ENCODE measurements at regions of chr14 and their contacts with region 1.

Region 1: DNA sequence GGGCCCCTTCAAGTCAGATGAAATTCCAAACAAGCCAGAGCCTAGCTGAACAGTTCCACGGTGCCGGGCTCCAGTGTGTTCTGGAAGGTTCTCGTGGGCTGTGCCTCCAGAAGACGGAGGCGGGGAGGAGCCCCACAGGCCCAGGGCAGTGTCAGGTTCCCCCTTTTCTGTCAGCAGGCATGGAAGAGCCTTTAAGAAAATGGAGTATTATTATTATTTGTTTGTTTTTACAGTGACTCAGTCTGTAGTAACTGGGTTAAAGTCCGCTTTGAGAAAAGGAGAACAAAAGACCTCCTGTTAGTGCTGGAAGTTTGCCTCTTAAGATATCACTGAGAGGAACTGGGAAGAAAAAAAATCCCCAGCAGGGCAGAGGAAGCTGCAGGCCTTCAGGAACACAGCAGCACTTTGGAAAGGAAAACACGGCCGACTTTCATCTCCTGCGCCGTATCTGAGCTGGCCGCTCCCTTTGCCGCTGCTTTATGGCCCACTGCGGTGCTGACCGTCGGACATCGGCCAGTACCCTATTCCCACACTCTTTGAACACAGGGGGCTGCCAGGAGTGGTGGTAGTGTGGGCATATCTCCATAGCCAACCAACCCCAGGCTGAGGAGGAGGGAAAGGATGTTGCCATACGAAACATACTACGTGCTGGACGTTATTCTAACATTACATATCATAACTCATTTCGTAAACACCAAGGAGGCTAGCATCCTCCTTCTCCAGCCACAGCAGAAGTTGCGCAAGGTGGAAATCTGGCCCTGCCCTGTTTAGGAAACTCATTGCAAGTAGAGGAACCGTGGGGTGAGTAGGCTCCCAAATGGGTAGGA is 194.0 kb downstream of the ZFP36L1 start:
- DNase-seq: peak; percentile 72 to 82 (median 77)
- ATAC-seq: peak; percentile 63 to 95 (median 92)
- H3K4me3 ChIP-seq: peak overlapping the region in 4 of 12 donors; percentile 6 to 30 (median 9)
- H3K27ac ChIP-seq: peak overlapping the region; percentile 59 to 98 (median 91)
- H3K4me1 ChIP-seq: peaks cover 0 to 70% (median 21%) of the 10 kb centered on the region in 12 donors
- H3K27me3 ChIP-seq: no peaks in the 10 kb centered on the region
- CTCF ChIP-seq: no peak
- POLR2A ChIP-seq: no peak

Region 2: DNA sequence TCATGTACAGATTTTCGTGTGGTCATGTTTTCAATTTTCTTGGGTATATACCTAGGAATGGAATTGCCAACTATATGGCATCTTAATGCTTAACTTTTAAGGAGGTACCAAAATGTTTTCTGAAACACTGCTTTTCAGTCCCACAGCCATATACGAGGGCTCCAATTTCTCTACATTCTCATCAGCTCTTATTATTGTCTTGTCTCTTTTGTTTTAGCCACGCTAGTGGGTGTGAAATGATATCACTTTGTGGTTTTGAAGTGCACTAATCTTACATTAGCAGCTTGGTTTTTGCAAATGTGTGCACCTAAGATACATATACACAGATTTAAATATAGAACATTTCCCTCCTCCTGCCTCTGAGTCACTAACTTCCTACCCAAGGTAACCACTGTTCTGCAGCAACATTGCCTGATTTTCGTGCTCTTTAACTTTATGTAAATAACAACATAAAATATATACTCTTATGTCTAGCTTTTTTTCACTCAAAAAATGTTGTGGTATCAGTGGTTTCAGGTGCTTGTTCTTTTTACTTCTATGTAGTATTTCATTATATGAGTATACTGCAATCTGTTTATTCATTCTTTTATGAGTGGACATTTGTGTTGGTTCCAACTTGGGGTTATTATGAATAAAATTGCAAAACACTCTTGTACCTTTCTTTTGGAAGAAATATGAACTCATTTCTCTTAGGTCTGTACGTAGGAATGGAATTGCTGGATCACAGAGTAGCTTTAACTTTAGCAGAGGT is 121.0 kb after region 1 on chr14:
- intact Hi-C with region 1: loop called in 1 of 10 experiments (anchors 10 kb)
- DNase-seq: no peak
- ATAC-seq: no peak
- H3K4me3 ChIP-seq: no peak overlapping the region
- H3K27ac ChIP-seq: no peak overlapping the region
- H3K4me1 ChIP-seq: peaks cover 0 to 26% (median 9%) of the 10 kb centered on the region in 12 donors
- H3K27me3 ChIP-seq: no peaks in the 10 kb centered on the region
- CTCF ChIP-seq: no peak
- POLR2A ChIP-seq: no peak

Measured in heart left ventricle (tissue), 16 donors.